Aorta (tissue), 5 donors: ENCODE measurements at regions of chr17 and their contacts with region 1.

Region 1: DNA sequence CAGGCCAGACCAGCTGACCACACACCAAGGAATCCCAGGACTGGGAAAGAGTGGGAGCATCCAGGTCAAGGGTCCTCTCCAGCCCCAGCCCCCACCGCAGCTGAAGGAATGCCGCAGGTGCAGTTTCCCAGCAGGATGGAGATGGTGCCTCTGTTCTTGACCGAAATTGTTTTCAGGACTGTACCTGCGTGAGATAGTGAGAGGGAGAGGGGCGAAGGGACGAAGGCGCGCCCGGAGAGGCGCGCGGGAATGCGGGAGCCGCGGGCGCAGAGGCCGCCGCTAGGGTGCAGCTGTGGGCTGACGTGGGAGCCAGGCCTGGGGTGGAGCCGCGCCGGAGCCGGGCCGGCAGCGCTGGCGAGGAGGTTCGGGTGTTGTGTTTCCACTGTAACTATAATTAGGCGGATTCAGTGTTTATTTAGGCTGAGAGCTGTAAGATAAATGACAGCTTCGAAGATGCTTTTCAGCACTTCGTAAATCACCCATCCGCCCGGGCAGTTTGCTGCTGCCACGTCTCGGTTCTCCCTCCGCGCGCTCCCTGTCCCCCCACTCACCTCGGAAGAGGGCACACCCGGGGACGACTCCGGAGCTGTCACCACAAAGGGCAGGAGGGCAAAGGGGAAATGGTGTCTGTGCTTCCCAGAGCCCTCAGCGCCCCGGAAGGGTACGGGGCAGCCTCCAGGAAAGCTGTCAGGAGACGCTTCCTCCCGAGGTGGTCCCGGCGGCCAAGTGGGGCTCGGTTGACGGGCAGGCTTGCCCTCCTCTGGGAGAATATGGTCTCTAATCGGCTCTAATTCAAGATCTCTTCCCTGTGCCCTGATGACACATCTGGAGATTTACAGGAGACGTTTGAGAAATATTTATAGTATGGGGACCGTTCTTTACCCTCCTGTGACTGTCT is 38.2 kb downstream of the HOXB1 start:
- DNase-seq: peak; percentile 82 to 94
- ATAC-seq: peak; percentile 96
- H3K4me3 ChIP-seq: no peak overlapping the region
- H3K27ac ChIP-seq: no peak overlapping the region
- H3K4me1 ChIP-seq: no peaks in the 10 kb centered on the region
- H3K27me3 ChIP-seq: no peaks in the 10 kb centered on the region

Region 2: GRCh38 chr17:48357779-48358602 is 134.7 kb before region 1 on chr17:
- intact Hi-C with region 1: no loop called
- DNase-seq: no peak
- ATAC-seq: no peak
- H3K4me3 ChIP-seq: no peak overlapping the region
- H3K27ac ChIP-seq: no peak overlapping the region
- H3K4me1 ChIP-seq: no peaks in the 10 kb centered on the region
- H3K27me3 ChIP-seq: no peaks in the 10 kb centered on the region

Region 3: GRCh38 chr17:48593840-48594537 is 101.3 kb after region 1 on chr17:
- intact Hi-C with region 1: loop called (anchors 2 kb)
- DNase-seq: peak; percentile 88 to 95
- ATAC-seq: peak; percentile 88
- H3K4me3 ChIP-seq: no peak overlapping the region
- H3K27ac ChIP-seq: no peak overlapping the region
- H3K4me1 ChIP-seq: no peaks in the 10 kb centered on the region
- H3K27me3 ChIP-seq: no peaks in the 10 kb centered on the region